AG04450 (cell line): ENCODE measurements at regions of chrX and their contacts with region 1.

Region 1: GRCh38 chrX:23742697-23743622 is at the start of gene ACOT9:
- DNase-seq: peak; percentile 89
- H3K4me3 ChIP-seq: peak within 1 kb of the TSS; percentile 75
- H3K27ac ChIP-seq: peak within 1 kb of the TSS; percentile 87
- H3K27me3 ChIP-seq: no peaks in the 10 kb centered on the region
- CTCF ChIP-seq: no peak
- polyA plus RNA-seq, gene ACOT9: 45.7 and 62.5 TPM in 2 replicates

Region 2: DNA sequence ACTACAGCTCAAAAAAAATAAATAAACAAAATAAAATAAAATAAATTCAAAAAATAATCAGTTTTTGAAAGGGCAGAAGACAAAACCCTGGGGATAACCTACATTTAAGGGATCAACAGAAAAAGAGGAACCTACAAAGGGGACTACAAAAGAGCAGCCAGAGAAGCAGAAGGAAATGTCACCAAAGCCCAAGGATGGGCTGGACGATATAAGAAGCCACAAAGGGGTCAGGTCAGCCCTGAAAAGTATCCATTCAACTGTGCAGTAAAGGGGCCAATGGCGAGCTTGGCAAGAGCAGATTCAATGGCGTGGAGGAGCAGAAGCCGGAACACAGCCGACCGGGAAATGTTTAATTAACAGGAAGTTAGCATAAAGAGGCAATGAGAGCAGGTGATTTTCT is 16.8 kb before region 1 on chrX:
- CTCF ChIA-PET with region 1: no interaction called
- POLR2A ChIA-PET with region 1: no interaction called
- DNase-seq: no peak
- H3K4me3 ChIP-seq: no peak overlapping the region
- H3K27ac ChIP-seq: no peak overlapping the region
- H3K27me3 ChIP-seq: no peaks in the 10 kb centered on the region
- CTCF ChIP-seq: no peak

Region 3: DNA sequence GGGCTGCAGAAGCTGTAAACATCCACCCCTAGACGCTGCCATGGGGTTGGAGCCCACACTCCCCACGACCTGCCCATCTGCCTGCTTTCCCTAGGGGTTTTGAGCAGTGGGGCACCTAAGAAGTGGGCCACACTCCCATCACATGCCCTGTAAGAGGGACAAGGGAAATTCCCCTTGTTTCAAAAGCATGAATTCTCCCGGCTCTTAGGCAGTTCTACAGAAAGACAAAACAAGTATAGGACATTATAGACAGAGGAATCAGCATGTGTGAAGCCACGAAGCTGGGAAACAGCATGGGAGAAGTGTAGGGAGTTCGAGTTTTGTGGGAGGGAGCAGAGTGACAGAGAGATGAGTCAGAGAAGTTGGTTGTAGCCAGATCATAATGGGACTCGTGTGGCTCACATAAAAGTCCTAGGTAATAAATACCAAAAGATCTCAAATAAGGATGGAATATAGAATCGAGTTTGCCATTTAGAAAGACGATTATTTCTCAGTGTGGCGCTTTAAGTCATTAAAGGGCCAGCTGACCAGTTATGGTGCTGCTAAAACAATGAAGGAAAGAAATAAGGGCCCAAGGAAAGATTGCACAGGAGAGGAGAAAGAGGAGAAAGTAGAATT is 140.9 kb after region 1 on chrX:
- CTCF ChIA-PET with region 1: no interaction called
- POLR2A ChIA-PET with region 1: interaction called, 11 read pairs
- DNase-seq: no peak
- H3K4me3 ChIP-seq: peak overlapping the region; percentile 10; the same call in 1 of the 2 replicates
- H3K27ac ChIP-seq: peak overlapping the region; percentile 73
- H3K27me3 ChIP-seq: no peaks in the 10 kb centered on the region
- CTCF ChIP-seq: no peak